ENCODE measurements at regions of chr12 and their contacts with region 1.

Region 1: DNA sequence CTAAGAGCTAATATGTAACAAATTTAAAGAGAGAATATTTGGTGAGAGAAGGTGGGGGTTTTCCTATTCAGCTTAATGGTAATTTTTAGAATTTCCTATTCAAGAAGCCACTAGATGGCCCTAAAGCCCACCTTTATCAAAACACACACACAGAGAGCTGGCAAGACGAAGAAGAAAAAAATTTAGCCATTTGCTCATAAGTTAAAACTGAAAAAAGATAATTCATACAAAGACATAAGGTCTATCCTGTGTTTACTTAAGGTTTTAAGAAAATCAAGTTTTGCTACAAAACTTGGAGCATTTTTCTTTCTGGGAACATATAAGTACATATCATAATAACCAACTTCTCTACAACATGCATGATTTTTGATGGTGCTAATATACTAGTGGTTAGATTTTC is 46.8 kb upstream of the PCED1B start:
- DNase-seq: no peak
- ATAC-seq: peak; percentile 63
- H3K4me3 Mint-ChIP-seq: no peak overlapping the region
- H3K27ac Mint-ChIP-seq: no peak overlapping the region
- H3K4me1 Mint-ChIP-seq: peaks cover 8% of the 10 kb centered on the region
- H3K27me3 Mint-ChIP-seq: no peaks in the 10 kb centered on the region

Region 2: DNA sequence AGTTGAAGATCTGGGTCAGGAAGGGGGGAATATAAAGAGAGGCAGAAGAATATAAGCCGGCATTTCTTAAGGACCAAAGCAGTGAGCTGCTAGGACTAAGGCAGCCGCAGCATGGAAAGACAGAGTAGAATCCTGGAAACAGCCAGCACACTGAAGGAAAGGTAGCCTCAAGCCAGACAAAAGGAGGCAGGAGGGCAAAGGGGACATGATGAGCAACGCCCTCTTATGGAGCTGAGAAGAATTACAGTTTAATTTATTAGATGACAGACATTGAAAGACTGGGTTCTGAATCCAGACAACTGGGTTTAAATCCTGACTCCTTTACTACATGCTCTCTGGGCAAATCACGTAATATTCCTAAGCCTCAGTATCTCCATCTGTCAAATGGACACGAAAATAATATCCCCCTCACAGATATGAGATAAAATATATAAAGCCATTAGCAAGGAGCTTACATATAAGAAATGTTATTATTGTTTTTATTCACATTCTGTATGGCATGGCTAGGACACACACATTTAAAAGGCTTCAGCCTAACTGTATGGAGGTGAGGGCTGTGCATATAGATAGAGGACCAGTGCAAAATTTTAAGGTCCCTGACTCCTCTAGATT is 38.7 kb after region 1 on chr12:
- CTCF ChIA-PET with region 1: interaction called, 38 read pairs
- DNase-seq: no peak
- ATAC-seq: peak; percentile 33
- H3K4me3 Mint-ChIP-seq: no peak overlapping the region
- H3K27ac Mint-ChIP-seq: no peak overlapping the region
- H3K4me1 Mint-ChIP-seq: peaks cover 11% of the 10 kb centered on the region
- H3K27me3 Mint-ChIP-seq: no peaks in the 10 kb centered on the region

Region 3: DNA sequence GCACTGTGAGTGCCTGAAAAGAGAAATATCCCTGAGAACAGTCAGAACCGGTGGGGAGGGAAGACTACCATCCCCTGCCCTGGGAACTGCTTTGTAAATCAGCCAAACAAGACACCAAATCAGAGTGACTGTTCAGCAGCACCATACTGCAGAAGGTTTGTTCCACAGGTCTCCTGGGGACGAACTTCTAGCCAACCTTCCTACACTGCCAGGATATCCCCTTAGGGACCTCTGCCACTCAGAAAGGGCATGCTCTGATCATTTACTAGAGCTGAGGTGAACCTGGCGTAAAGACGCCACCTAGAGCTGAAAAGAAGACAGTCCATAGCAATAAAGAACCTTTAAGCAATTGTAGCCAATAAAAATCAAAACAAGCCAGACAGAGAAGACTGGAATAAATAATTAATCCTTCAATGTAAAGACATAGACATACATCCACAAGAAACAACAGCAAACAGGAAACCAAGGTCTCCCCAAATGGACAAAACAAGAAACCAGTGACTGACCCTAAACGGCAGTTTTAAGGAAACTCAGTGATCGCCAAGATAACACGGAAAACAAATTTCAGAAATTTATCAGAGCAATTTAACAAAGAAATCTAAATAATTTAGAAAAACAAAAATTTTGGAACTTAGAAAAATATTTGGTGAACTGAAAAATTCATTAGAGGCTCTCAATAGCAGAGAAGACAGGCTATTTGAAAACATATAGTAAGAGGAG is 275.2 kb after region 1 on chr12:
- CTCF ChIA-PET with region 1: interaction called, 19 read pairs
- DNase-seq: peak; percentile 74
- ATAC-seq: peak; percentile 99
- H3K4me3 Mint-ChIP-seq: peak overlapping the region; percentile 62
- H3K27ac Mint-ChIP-seq: peak overlapping the region; percentile 74
- H3K4me1 Mint-ChIP-seq: peaks cover 33% of the 10 kb centered on the region
- H3K27me3 Mint-ChIP-seq: no peaks in the 10 kb centered on the region